ENCODE measurements at regions of chr5 and their contacts with region 1.

Region 1: GRCh38 chr5:66324357-66324756 is 180.3 kb downstream of the SREK1 start:
- DNase-seq: no peak
- H3K4me3 ChIP-seq: no peak overlapping the region
- H3K27ac ChIP-seq: no peak overlapping the region
- H3K4me1 ChIP-seq: no peaks in the 10 kb centered on the region
- H3K27me3 ChIP-seq: no peaks in the 10 kb centered on the region
- CTCF ChIP-seq: no peak
- EP300 ChIP-seq: no peak
- POLR2A ChIP-seq: no peak

Region 2: GRCh38 chr5:66367814-66368541 is 43.6 kb after region 1 on chr5:
- intact Hi-C with region 1: no loop called
- DNase-seq: no peak
- H3K4me3 ChIP-seq: no peak overlapping the region
- H3K27ac ChIP-seq: no peak overlapping the region
- H3K4me1 ChIP-seq: no peaks in the 10 kb centered on the region
- H3K27me3 ChIP-seq: no peaks in the 10 kb centered on the region
- CTCF ChIP-seq: no peak
- EP300 ChIP-seq: no peak
- POLR2A ChIP-seq: no peak

Region 3: GRCh38 chr5:66929995-66930394 is 605.6 kb after region 1 on chr5:
- intact Hi-C with region 1: loop called (anchors 5 kb)
- DNase-seq: no peak
- H3K4me3 ChIP-seq: no peak overlapping the region
- H3K27ac ChIP-seq: no peak overlapping the region
- H3K4me1 ChIP-seq: no peaks in the 10 kb centered on the region
- H3K27me3 ChIP-seq: no peaks in the 10 kb centered on the region
- CTCF ChIP-seq: no peak
- EP300 ChIP-seq: no peak
- POLR2A ChIP-seq: no peak